SK-N-SH (cell line): ENCODE measurements at regions of chr12 and their contacts with region 1.

Region 1: GRCh38 chr12:62435303-62436163 is 31.1 kb upstream of the MON2 start:
- DNase-seq: peak; percentile 61
- H3K4me3 ChIP-seq: peak overlapping the region; percentile 57 to 58
- H3K27ac ChIP-seq: no peak overlapping the region
- H3K4me1 ChIP-seq: peaks cover 0 to 14% of the 10 kb centered on the region in 2 experiments; a peak in 2 of 4 replicates
- H3K27me3 ChIP-seq: no peaks in the 10 kb centered on the region
- CTCF ChIP-seq: peak; percentile 63
- EP300 ChIP-seq: no peak
- RAD21 ChIP-seq: peak; percentile 42

Region 2: DNA sequence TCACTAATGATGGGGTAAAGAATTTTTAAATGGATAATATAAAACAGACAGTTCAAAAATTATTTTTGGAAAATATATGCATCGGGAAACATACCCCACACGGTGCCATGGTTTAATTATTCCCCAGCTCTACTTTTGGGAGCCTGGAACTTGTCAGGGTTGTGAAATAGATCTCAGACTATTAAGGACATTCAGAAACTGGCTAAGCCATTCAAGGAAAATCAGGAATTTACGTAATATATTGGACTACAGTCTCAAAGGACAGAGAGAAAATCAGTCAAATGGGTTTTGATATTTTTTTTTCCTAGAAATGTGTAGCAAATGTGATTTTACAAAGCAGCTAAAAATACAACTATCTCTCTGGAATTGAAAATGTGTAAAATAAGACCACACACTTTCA is 26.5 kb before region 1 on chr12:
- CTCF ChIA-PET with region 1: interaction called, 16 read pairs
- POLR2A ChIA-PET with region 1: no interaction called
- DNase-seq: no peak
- H3K4me3 ChIP-seq: no peak overlapping the region
- H3K27ac ChIP-seq: no peak overlapping the region
- H3K4me1 ChIP-seq: no peaks in the 10 kb centered on the region
- H3K27me3 ChIP-seq: no peaks in the 10 kb centered on the region
- CTCF ChIP-seq: no peak
- EP300 ChIP-seq: no peak
- RAD21 ChIP-seq: no peak

Region 3: DNA sequence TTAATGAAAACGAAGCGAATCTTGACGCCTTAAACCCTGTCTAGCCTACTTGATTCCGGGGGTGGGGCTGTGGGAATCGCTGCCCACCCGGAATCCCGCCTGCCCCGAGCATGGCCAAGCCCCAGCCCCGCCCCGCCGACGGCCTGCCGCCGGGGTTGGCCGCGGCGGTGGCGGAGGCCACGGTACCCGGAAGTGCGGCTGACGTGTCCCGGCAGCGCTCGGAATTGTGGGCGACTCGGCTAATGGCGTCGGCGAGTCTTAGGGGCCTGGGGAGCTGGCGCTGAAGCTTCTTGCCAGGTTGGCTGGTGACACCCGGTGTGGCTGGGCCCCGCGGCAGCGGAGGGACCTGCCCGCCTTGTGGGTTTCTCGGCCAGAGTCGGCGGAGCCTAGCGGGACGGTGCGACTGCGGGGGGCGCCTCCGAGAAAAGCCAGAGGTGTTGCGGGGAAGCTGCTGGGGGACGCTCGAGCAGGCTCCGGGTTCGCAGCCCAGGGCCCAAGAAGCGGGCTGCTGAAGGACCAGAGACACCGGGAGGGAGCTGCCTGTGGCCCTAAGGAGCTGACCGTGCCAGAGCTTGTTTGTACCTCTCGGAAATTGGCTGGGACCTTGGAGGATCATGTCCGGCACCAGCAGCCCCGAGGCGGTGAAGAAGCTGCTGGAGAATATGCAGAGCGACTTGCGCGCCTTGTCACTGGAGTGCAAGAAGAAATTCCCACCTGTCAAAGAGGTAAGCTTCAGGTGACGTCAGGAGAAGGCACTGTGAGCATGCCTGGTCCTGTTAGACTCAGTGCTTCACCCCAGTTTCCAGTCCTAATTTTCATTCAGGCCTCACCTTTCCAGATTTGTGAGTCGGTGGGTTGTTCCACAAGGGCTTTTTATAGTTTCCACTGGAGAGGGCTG is 31.3 kb after region 1 on chr12 and contains the start of gene MON2:
- CTCF ChIA-PET with region 1: interaction called, 31 read pairs
- POLR2A ChIA-PET with region 1: no interaction called
- DNase-seq: peak; percentile 97
- H3K4me3 ChIP-seq: peak within 1 kb of the TSS; percentile 94 to 96
- H3K27ac ChIP-seq: peak within 1 kb of the TSS; percentile 74 to 80
- H3K4me1 ChIP-seq: peaks cover 0 to 5% of the 10 kb centered on the region in 2 experiments; a peak in 2 of 4 replicates
- H3K27me3 ChIP-seq: no peaks in the 10 kb centered on the region
- CTCF ChIP-seq: no peak
- EP300 ChIP-seq: peak in 1 of 2 experiments; percentile 34; a peak in 1 of 4 replicates
- RAD21 ChIP-seq: no peak
- polyA plus RNA-seq, gene MON2: 4.4 and 5.1 TPM in 2 replicates

Region 4: GRCh38 chr12:62588916-62589315 is 153.4 kb after region 1 on chr12:
- CTCF ChIA-PET with region 1: interaction called, 10 read pairs
- POLR2A ChIA-PET with region 1: no interaction called
- DNase-seq: no peak
- H3K4me3 ChIP-seq: no peak overlapping the region
- H3K27ac ChIP-seq: peak overlapping the region in 1 of 2 experiments; percentile 57; a peak in 2 of 4 replicates
- H3K4me1 ChIP-seq: peaks cover 0 to 5% of the 10 kb centered on the region in 2 experiments; a peak in 1 of 4 replicates
- H3K27me3 ChIP-seq: no peaks in the 10 kb centered on the region
- CTCF ChIP-seq: no peak
- EP300 ChIP-seq: no peak
- RAD21 ChIP-seq: no peak

Region 5: DNA sequence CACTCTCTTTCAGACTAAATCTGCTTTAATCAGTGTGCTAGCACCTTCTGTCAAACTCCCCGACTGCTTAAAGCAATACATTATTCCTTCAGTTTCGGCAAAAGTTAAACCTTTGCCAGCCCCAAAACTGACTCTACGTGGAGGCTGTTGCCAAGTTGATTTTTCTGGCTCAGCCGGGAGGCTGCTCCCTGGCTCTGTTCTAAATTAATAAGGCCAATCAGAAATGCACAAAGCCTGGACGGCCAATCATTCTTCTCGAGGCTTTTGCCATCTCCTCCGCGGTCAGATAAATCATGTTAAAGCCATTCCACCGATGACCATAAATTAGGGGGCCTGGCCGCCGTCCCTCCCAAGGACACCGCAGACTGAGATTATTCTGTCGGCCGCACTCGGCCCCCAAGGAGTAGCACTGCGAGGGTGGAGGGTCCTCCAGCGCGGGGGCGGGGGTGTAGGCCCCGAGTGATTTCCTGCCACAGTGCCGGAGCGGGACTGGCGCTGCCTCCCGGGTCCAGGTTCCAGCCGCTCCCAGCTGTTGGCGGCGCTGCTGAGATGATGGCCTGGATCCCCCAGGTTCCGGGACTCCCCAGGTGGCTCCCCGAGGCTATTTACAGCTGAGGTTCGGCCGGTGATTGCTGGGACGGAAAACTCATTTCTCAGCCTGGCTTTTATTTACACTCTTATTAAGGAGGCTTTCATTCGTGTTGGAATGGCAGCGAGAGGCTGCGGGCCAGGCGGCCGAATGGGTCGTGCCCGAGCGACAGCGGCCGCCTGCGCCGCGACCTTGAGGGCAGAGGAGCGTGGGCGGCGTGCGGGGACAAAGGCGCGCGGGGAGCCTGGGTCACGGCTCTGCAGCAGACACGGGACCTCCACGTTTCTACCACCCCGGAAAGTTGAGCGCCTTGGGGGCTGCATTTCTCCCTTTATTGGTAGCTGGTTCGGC is 196.2 kb after region 1 on chr12:
- CTCF ChIA-PET with region 1: no interaction called
- POLR2A ChIA-PET with region 1: no interaction called
- DNase-seq: peak; percentile 89
- H3K4me3 ChIP-seq: peak overlapping the region; percentile 55
- H3K27ac ChIP-seq: peak overlapping the region; percentile 42 to 84; a peak in 3 of 4 replicates
- H3K4me1 ChIP-seq: peaks cover 4 to 10% of the 10 kb centered on the region in 2 experiments; a peak in 2 of 4 replicates
- H3K27me3 ChIP-seq: no peaks in the 10 kb centered on the region
- CTCF ChIP-seq: peak; percentile 57
- EP300 ChIP-seq: peak; percentile 31 to 68; a peak in 3 of 4 replicates
- RAD21 ChIP-seq: peak; percentile 19; the same call in 1 of the 2 replicates

Region 6: GRCh38 chr12:62799126-62799736 is 363.7 kb after region 1 on chr12:
- CTCF ChIA-PET with region 1: interaction called, 189 read pairs
- POLR2A ChIA-PET with region 1: no interaction called
- DNase-seq: peak; percentile 81
- H3K4me3 ChIP-seq: no peak overlapping the region; a peak in 1 of 4 replicates
- H3K27ac ChIP-seq: no peak overlapping the region
- H3K4me1 ChIP-seq: peaks cover 0 to 3% of the 10 kb centered on the region in 2 experiments; a peak in 1 of 4 replicates
- H3K27me3 ChIP-seq: no peaks in the 10 kb centered on the region
- CTCF ChIP-seq: peak; percentile 98
- EP300 ChIP-seq: no peak
- RAD21 ChIP-seq: peak; percentile 93